ENCODE measurements at regions of chr19 and their contacts with region 1.

Region 1: DNA sequence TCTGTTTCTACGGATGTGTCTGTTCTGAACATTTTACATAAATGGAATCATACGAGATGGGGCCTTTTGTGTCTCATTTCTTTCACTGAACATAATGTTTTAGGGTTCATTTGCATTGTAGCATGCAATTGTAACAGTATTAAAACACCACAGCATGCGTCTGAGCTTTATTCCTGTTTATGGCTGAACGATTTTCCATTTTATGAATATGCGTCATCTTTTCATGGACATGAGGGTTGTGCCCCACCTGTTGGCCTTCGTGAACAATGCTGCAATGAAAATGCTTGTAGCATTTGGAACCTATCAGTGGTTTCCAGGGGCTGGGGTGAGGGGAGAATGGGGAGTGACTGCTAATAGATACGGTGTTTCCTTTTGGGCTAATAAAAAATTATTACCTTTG is 5.1 kb downstream of the OR10H1 start:
- DNase-seq: peak; percentile 37 to 63
- H3K4me3 ChIP-seq: no peak overlapping the region
- H3K27ac ChIP-seq: no peak overlapping the region
- H3K4me1 ChIP-seq: peaks cover 6% of the 10 kb centered on the region; the same call in 1 of the 2 replicates
- H3K27me3 ChIP-seq: no peaks in the 10 kb centered on the region
- CTCF ChIP-seq: peak; percentile 63

Region 2: DNA sequence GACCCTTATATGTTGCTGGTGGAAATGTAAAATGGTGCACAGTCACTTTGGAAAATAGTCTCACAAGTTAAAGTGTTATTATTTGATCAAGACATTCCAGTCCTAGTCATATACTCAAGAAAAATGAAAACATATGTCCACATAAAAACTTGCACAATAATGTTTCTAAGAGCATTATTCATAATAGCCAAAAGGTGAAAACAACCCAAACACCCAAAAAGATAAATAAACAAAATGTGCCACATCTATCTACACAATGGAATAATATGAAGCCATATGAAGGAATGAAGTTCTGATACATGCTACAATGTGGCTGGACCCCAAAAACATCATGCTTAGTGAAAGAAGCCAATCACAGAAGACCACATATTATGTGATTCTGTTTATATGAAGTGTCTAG is 416.4 kb before region 1 on chr19:
- CTCF ChIA-PET with region 1: no interaction called
- POLR2A ChIA-PET with region 1: no interaction called
- intact Hi-C with region 1: no loop called
- DNase-seq: no peak
- H3K4me3 ChIP-seq: no peak overlapping the region
- H3K27ac ChIP-seq: no peak overlapping the region
- H3K4me1 ChIP-seq: no peaks in the 10 kb centered on the region
- H3K27me3 ChIP-seq: no peaks in the 10 kb centered on the region
- CTCF ChIP-seq: no peak

Region 3: GRCh38 chr19:15584541-15585115 is 225.7 kb before region 1 on chr19:
- CTCF ChIA-PET with region 1: no interaction called
- POLR2A ChIA-PET with region 1: no interaction called
- intact Hi-C with region 1: loop called (anchors 5 kb)
- DNase-seq: peak; percentile 68 to 78
- H3K4me3 ChIP-seq: no peak overlapping the region
- H3K27ac ChIP-seq: no peak overlapping the region
- H3K4me1 ChIP-seq: no peaks in the 10 kb centered on the region
- H3K27me3 ChIP-seq: peaks cover 19% of the 10 kb centered on the region
- CTCF ChIP-seq: peak; percentile 95

Region 4: GRCh38 chr19:15869109-15869555 is 58.8 kb after region 1 on chr19:
- CTCF ChIA-PET with region 1: no interaction called
- POLR2A ChIA-PET with region 1: no interaction called
- intact Hi-C with region 1: loop called (anchors 1 kb)
- DNase-seq: peak; percentile 58 to 81
- H3K4me3 ChIP-seq: no peak overlapping the region
- H3K27ac ChIP-seq: no peak overlapping the region
- H3K4me1 ChIP-seq: peaks cover 16% of the 10 kb centered on the region
- H3K27me3 ChIP-seq: no peaks in the 10 kb centered on the region
- CTCF ChIP-seq: peak; percentile 91

Region 5: GRCh38 chr19:16076154-16076957 is 266.0 kb after region 1 on chr19 and contains the start of gene TPM4:
- CTCF ChIA-PET with region 1: no interaction called
- POLR2A ChIA-PET with region 1: no interaction called
- intact Hi-C with region 1: no loop called
- DNase-seq: peak; percentile 77 to 92
- H3K4me3 ChIP-seq: peak within 1 kb of the TSS; percentile 70
- H3K27ac ChIP-seq: peak within 1 kb of the TSS; percentile 99
- H3K4me1 ChIP-seq: peaks cover 43% of the 10 kb centered on the region
- H3K27me3 ChIP-seq: no peaks in the 10 kb centered on the region
- CTCF ChIP-seq: no peak
- total RNA-seq, gene TPM4: 279 and 307 TPM in 2 replicates